ENCODE measurements at regions of chr7 and their contacts with region 1.

Region 1: DNA sequence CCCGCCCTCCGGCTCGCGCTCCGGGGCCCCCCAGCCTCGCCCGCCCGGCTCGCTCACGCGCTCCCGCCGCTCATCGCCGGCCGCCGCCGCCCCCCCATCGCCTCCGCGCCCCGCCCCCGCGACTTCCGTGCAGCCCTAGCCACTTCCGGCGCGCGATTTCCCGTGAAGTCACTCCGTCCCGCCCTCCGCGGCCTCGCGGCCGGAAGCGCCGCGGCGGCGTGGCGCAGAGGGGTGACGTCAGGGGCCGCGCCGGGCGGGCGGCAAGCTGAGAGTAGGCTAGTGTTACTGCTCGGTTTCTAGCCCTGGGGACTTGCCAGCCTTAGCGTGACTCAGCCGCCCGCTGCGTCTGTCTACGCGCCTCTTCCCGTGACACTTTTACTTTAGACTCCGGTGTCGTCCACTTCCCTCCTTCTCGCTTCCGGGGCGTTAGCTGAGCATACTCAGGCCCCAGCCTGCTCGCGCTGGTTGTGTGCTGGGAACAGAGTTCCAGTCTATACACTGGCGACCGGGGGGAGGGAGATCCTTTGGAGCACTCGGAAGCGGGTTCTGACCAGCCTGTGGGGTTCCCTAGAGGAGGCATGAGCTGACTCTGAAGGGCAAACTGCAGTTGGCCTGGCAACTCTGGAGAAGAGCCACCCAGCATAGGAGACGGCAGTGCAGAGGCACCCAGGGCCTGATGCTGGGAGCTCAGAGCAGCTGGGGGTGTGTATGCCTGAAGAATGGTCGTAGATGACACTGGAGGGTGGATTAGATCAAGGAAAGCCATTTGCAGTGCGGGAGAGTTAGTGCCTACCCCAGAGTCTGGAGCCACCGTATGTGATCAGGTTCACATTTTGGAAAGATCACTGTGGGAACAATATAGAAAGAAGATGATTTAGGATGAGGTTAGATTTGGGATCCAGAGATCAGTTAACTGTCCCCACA is at the start of gene PURB:
- DNase-seq: peak; percentile 97
- H3K4me3 ChIP-seq: peak within 1 kb of the TSS; percentile 82 to 94 (median 92)
- H3K27ac ChIP-seq: peak within 1 kb of the TSS; percentile 99 to 100 (median 99)
- H3K4me1 ChIP-seq: peaks cover 0 to 52% (median 40%) of the 10 kb centered on the region in 4 donors
- H3K27me3 ChIP-seq: no peaks in the 10 kb centered on the region
- CTCF ChIP-seq: no peak
- EP300 ChIP-seq: peak in 2 of 4 donors; percentile 13 to 25
- POLR2A ChIP-seq: peak; percentile 88 to 93
- total RNA-seq, gene PURB: 31.4 to 40.3 (median 38.5) TPM

Region 2: DNA sequence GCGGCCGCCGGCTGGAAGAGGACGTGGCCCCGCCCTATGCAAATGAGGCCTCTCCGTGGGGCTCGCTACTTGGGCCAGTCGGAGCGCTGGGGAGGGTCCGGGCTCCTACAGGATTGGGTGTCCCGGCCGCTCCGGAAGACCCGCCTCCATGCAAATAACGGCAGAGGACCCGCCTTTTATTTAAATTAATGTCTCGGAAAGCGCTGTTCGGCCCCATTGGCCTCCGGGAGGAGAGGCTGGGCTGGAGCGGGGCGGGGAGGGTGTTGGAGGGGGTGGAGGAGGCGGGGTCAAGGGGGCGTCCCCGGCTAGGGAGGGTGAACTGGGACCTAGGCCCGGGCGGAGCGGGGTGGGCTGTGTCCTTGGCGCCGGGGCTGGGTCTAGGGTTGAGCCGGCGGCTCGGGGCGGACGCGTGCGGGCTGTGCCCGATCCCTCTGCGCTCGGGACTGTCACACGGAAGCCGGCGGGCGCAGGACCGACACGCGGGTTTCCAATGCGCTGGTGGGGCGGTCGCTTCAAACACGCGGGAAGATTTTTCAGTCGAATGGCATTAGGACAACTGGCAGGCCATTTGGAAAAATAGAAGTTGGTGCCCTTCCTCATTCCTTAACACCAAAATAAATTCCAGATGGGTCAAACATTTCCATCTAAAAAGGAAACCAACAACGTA is 803.0 kb before region 1 on chr7:
- intact Hi-C with region 1: loop called (anchors 10 kb)
- DNase-seq: peak; percentile 100
- H3K4me3 ChIP-seq: peak overlapping the region; percentile 64 to 83 (median 77)
- H3K27ac ChIP-seq: peak overlapping the region; percentile 88 to 91 (median 89)
- H3K4me1 ChIP-seq: peaks cover 0 to 25% (median 14%) of the 10 kb centered on the region in 4 donors
- H3K27me3 ChIP-seq: no peaks in the 10 kb centered on the region
- CTCF ChIP-seq: no peak
- EP300 ChIP-seq: no peak
- POLR2A ChIP-seq: peak in 1 of 2 donors; percentile 61

Region 3: GRCh38 chr7:44748045-44748947 is 137.4 kb before region 1 on chr7 and contains the start of gene ZMIZ2:
- intact Hi-C with region 1: loop called (anchors 5 kb)
- DNase-seq: peak; percentile 97
- H3K4me3 ChIP-seq: peak within 1 kb of the TSS; percentile 56 to 96 (median 78)
- H3K27ac ChIP-seq: peak within 1 kb of the TSS; percentile 94 to 97 (median 95)
- H3K4me1 ChIP-seq: peaks cover 0 to 32% (median 23%) of the 10 kb centered on the region in 4 donors
- H3K27me3 ChIP-seq: no peaks in the 10 kb centered on the region
- CTCF ChIP-seq: no peak
- EP300 ChIP-seq: no peak
- POLR2A ChIP-seq: peak in 1 of 2 donors; percentile 13
- total RNA-seq, gene ZMIZ2: 11.1 to 44.6 (median 12.5) TPM

Region 4: GRCh38 chr7:44847508-44847920 is 38.1 kb before region 1 on chr7:
- intact Hi-C with region 1: loop called (anchors 1 kb)
- DNase-seq: peak; percentile 94
- H3K4me3 ChIP-seq: peak overlapping the region; percentile 64 to 83 (median 74)
- H3K27ac ChIP-seq: peak overlapping the region; percentile 92 to 99 (median 97)
- H3K4me1 ChIP-seq: peaks cover 0 to 54% (median 44%) of the 10 kb centered on the region in 4 donors
- H3K27me3 ChIP-seq: no peaks in the 10 kb centered on the region
- CTCF ChIP-seq: peak; percentile 46 to 91 (median 64)
- EP300 ChIP-seq: no peak
- POLR2A ChIP-seq: peak; percentile 7 to 23

Region 5: GRCh38 chr7:45111298-45112223 is 225.9 kb after region 1 on chr7 and contains the start of gene TBRG4:
- intact Hi-C with region 1: loop called (anchors 2 kb)
- DNase-seq: peak; percentile 96
- H3K4me3 ChIP-seq: peak within 1 kb of the TSS; percentile 66 to 85 (median 71)
- H3K27ac ChIP-seq: peak within 1 kb of the TSS; percentile 88 to 93 (median 90)
- H3K4me1 ChIP-seq: peaks cover 0 to 48% (median 44%) of the 10 kb centered on the region in 4 donors
- H3K27me3 ChIP-seq: no peaks in the 10 kb centered on the region
- CTCF ChIP-seq: peak in 1 of 4 experiments; percentile 14
- EP300 ChIP-seq: peak in 2 of 4 donors; percentile 22 to 53
- POLR2A ChIP-seq: peak; percentile 88 to 91
- total RNA-seq, gene TBRG4: 40.3 to 57.1 (median 46.8) TPM